T-cell (primary cell): ENCODE measurements at regions of chr13 and their contacts with region 1.

Region 1: DNA sequence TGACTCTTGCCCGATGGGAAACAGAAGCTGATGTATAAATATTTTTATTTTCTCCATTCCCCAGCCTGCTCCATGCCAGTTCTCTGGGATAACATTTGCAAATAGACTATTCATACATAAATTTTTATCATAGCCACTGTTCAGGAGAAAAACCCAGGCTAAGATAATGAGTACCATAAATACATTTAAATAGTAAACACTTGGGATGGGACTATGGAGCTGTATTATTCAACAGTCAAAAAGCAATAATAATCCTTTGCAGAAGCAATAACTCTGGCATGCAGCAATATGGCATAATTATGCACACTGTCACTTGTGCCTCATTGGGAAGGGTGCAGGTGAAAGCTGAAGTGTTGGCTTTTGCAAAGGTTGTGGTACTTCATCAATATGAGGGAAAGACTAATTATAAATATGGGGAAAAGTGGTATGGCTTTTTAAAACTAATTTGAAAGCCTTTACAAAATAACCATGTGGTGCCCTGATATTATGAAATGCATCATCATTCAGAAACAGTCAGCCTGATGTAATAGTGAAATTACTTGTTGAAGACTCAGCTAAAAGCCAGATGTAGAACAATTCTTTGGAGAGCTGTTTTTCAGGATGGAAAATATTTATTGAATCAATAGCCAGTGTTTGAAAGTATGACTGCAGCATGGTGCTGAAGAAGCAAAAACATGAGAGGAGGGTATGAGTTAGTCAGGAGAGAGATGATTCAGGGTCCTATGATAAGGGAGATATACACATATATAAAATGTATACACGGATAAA is 2476.7 kb downstream of the PCDH9 start:
- DNase-seq: no peak
- ATAC-seq: no peak
- H3K4me3 ChIP-seq: no peak overlapping the region
- H3K4me3 Mint-ChIP-seq: no peak overlapping the region
- H3K27ac ChIP-seq: no peak overlapping the region
- H3K27ac Mint-ChIP-seq: no peak overlapping the region
- H3K4me1 ChIP-seq: no peaks in the 10 kb centered on the region
- H3K4me1 Mint-ChIP-seq: no peaks in the 10 kb centered on the region
- H3K27me3 ChIP-seq: no peaks in the 10 kb centered on the region
- H3K27me3 Mint-ChIP-seq: no peaks in the 10 kb centered on the region

Region 2: DNA sequence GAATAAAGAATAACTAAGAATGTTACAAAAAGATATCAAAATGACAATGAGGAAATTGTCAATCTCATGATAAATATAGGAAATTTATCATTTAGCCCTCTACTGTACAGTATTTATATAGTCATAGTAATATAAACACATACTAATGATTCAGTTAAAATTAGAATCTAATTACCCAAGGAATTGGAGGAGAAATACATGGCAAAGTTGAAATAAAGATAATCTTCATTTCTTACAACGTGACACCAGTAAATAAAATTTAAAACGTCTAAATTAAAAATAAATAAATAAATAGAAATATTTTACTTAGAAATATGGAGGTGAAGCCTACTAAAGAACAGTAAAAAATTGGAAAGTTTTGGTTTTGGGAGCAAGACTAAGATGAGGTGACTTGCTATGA is 1174.6 kb before region 1 on chr13:
- CTCF ChIA-PET with region 1: no interaction called
- POLR2A ChIA-PET with region 1: no interaction called
- DNase-seq: no peak
- ATAC-seq: no peak
- H3K4me3 ChIP-seq: no peak overlapping the region
- H3K4me3 Mint-ChIP-seq: no peak overlapping the region
- H3K27ac ChIP-seq: no peak overlapping the region
- H3K27ac Mint-ChIP-seq: no peak overlapping the region
- H3K4me1 ChIP-seq: no peaks in the 10 kb centered on the region
- H3K4me1 Mint-ChIP-seq: no peaks in the 10 kb centered on the region
- H3K27me3 ChIP-seq: no peaks in the 10 kb centered on the region
- H3K27me3 Mint-ChIP-seq: no peaks in the 10 kb centered on the region

Region 3: DNA sequence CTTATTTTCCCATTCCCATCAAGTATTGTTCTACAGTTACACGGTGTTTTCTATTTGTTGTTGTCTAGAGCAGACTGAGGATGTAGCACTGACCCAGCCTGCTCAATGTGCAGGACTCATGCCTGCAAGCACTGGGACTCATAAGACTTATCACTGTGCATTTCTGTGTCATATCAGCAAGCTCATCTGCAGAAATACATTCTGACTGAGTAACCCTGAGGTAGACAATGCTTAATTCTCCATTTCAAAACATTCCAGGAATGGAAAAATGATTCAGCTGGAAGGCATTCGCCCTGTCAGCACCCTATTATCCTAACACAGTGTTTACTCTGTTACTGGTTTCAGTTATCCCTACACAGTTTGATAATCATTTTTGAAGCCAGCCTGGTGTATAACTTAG is 29.7 kb before region 1 on chr13:
- CTCF ChIA-PET with region 1: no interaction called
- POLR2A ChIA-PET with region 1: interaction called in 1 of 2 experiments, 10 read pairs
- DNase-seq: no peak
- ATAC-seq: no peak
- H3K4me3 ChIP-seq: no peak overlapping the region
- H3K4me3 Mint-ChIP-seq: no peak overlapping the region
- H3K27ac ChIP-seq: no peak overlapping the region
- H3K27ac Mint-ChIP-seq: no peak overlapping the region
- H3K4me1 ChIP-seq: no peaks in the 10 kb centered on the region
- H3K4me1 Mint-ChIP-seq: no peaks in the 10 kb centered on the region
- H3K27me3 ChIP-seq: no peaks in the 10 kb centered on the region
- H3K27me3 Mint-ChIP-seq: no peaks in the 10 kb centered on the region